Activated CD4-positive, alpha-beta T cell treated with anti-CD3 and anti-CD28 coated beads, Interleukin-2, amount 10 ng/mL, durations not matched to agents 7 days and 5 days (primary cell): ENCODE measurements at regions of chr2 and their contacts with region 1.

Region 1: GRCh38 chr2:85888684-85889626 is at the start of gene ST3GAL5:
- DNase-seq: peak; percentile 90
- H3K4me3 Mint-ChIP-seq: peak within 1 kb of the TSS; percentile 85
- H3K27ac Mint-ChIP-seq: peak within 1 kb of the TSS; percentile 91
- H3K4me1 Mint-ChIP-seq: peaks cover 68% of the 10 kb centered on the region
- H3K27me3 Mint-ChIP-seq: no peaks in the 10 kb centered on the region
- total RNA-seq, gene ST3GAL5: 36.3 to 36.8 TPM

Region 2: GRCh38 chr2:85792783-85793441 is 96.0 kb before region 1 on chr2:
- CTCF ChIA-PET with region 1: no interaction called
- POLR2A ChIA-PET with region 1: no interaction called
- DNase-seq: no peak
- H3K4me3 Mint-ChIP-seq: no peak overlapping the region
- H3K27ac Mint-ChIP-seq: no peak overlapping the region
- H3K4me1 Mint-ChIP-seq: no peaks in the 10 kb centered on the region
- H3K27me3 Mint-ChIP-seq: peaks cover 3% of the 10 kb centered on the region

Region 3: GRCh38 chr2:85826990-85827878 is 61.7 kb before region 1 on chr2:
- CTCF ChIA-PET with region 1: interaction called, 27 read pairs
- POLR2A ChIA-PET with region 1: no interaction called
- DNase-seq: peak; percentile 83
- H3K4me3 Mint-ChIP-seq: no peak overlapping the region
- H3K27ac Mint-ChIP-seq: peak overlapping the region; percentile 72
- H3K4me1 Mint-ChIP-seq: peaks cover 31% of the 10 kb centered on the region
- H3K27me3 Mint-ChIP-seq: peaks cover 24% of the 10 kb centered on the region

Region 4: DNA sequence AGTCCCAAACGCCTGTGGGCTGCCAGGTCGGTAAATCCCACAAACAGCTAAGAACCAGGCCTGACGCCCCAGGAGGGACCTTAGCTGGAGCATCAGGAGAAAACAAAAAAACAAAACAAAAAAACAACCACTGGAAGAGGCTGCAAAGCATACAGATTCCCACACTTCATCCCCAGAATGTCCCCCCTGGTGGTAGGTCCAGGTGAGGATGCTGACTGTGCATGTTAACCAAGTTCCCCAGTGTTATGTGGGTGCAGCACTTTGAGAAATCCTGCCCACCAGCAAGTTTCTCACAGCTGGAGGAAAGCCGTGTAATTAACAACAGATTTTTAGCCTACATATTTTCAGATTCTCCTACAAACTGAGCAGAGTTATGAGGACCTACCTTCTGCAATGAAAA is 15.3 kb before region 1 on chr2:
- CTCF ChIA-PET with region 1: interaction called, 15 read pairs
- POLR2A ChIA-PET with region 1: no interaction called
- DNase-seq: peak; percentile 15
- H3K4me3 Mint-ChIP-seq: no peak overlapping the region
- H3K27ac Mint-ChIP-seq: no peak overlapping the region
- H3K4me1 Mint-ChIP-seq: peaks cover 21% of the 10 kb centered on the region
- H3K27me3 Mint-ChIP-seq: no peaks in the 10 kb centered on the region

Region 5: DNA sequence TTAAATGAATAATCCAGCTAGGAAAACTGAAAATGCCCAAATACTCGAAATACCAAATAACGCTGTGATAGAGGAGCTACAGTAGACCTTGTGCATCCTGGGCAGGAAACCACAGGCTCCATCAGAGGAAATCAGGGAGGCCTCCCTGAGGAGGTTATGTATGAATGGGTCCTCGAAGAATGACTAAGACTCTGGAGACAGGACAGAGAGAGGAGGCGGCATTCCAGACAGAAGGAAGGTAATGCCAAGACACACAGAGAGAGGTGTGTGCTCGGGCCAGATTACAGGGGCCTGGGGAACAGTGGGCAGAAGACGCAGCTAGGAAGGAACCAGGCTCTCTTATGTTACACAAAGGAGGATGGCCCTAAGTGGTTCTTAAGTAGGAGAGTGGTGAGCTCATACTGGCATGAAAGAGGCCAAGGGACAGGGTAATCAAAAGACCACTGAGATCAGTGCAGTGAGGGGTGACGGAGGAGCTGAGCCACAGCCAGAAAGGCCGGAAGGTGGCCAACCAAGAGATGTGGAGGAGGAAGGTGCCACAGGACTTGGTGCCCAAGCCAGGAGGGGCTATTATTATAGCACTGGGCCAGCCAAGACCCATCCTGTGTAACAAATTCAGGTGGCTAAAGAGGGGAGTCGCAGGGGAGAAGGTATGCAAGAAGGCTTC is 10.1 kb before region 1 on chr2:
- CTCF ChIA-PET with region 1: interaction called, 15 read pairs
- POLR2A ChIA-PET with region 1: no interaction called
- DNase-seq: no peak
- H3K4me3 Mint-ChIP-seq: no peak overlapping the region
- H3K27ac Mint-ChIP-seq: peak overlapping the region; percentile 58
- H3K4me1 Mint-ChIP-seq: peaks cover 44% of the 10 kb centered on the region
- H3K27me3 Mint-ChIP-seq: no peaks in the 10 kb centered on the region

Region 6: GRCh38 chr2:85900366-85900765 is 11.4 kb after region 1 on chr2:
- CTCF ChIA-PET with region 1: interaction called, 18 read pairs
- POLR2A ChIA-PET with region 1: no interaction called
- DNase-seq: no peak
- H3K4me3 Mint-ChIP-seq: no peak overlapping the region
- H3K27ac Mint-ChIP-seq: peak overlapping the region; percentile 61
- H3K4me1 Mint-ChIP-seq: peaks cover 19% of the 10 kb centered on the region
- H3K27me3 Mint-ChIP-seq: peaks cover 2% of the 10 kb centered on the region

Region 7: GRCh38 chr2:85994421-85994777 is 105.4 kb after region 1 on chr2:
- CTCF ChIA-PET with region 1: interaction called, 11 read pairs
- POLR2A ChIA-PET with region 1: no interaction called
- DNase-seq: no peak
- H3K4me3 Mint-ChIP-seq: peak overlapping the region; percentile 34
- H3K27ac Mint-ChIP-seq: peak overlapping the region; percentile 92
- H3K4me1 Mint-ChIP-seq: peaks cover 66% of the 10 kb centered on the region
- H3K27me3 Mint-ChIP-seq: no peaks in the 10 kb centered on the region

Region 8: DNA sequence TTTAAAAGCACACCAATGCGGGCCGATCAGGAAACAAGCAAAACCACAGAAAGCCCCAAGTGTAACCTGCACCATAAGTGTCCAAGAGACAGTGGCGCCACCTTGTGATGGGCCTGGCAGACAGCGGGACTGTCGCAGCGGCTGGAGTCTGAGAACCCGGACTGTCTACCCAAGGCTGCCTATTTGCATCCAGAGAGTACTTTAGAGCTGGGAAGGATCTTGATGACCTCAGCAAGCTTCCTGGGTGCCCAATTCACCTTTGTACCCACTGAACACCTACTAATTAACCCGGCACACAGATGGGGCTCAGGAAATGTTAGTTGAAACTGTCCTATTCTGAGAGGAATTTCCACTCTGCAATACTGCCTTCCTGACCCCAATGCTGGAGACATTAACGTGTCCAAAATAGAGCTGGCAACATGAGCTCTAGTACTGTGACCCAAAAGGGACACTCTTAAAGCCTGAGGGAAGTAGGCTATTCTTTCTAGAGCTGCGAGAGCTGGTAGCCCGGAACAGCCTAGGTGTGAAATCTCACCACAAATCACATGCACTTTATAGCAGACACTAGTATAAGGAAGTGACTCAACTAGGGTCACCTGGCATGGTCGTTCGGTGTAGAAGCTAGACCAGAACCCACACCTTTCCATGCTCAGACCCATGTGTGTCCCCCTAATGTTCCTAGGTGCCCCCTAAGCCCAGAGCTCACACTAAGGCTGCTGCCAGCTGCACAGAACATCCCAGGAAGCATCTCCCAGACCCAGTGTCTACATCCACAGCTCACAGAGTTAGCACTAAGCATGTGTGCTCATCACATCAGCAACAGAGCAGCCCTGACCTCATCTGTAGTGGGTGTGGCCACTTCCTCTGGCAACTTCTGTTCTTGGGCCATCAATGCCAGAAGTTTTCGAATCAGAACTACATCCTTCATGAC is 191.3 kb after region 1 on chr2:
- CTCF ChIA-PET with region 1: interaction called, 45 read pairs
- POLR2A ChIA-PET with region 1: no interaction called
- DNase-seq: peak; percentile 91
- H3K4me3 Mint-ChIP-seq: no peak overlapping the region
- H3K27ac Mint-ChIP-seq: peak overlapping the region; percentile 81
- H3K4me1 Mint-ChIP-seq: peaks cover 40% of the 10 kb centered on the region
- H3K27me3 Mint-ChIP-seq: no peaks in the 10 kb centered on the region

Region 9: DNA sequence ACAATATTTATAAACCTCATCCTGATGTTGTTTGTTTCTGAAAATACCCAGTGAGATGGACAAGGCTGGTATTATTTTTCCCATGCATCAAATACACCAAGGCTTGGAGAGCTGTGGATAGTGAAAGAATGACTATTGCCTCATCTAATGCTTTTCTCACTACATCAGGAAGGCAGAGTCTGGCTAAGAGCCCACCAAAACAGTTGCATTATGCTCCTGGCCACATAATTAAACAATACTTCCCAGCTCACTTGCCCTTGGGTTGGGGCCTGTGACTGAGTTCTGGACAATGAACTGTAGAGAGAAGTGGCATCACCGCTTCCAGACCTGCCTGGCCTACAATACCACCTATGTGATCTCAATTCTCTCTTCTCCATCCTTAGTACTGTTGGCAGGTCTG is 494.9 kb after region 1 on chr2:
- CTCF ChIA-PET with region 1: no interaction called
- POLR2A ChIA-PET with region 1: no interaction called
- DNase-seq: no peak
- H3K4me3 Mint-ChIP-seq: no peak overlapping the region
- H3K27ac Mint-ChIP-seq: no peak overlapping the region
- H3K4me1 Mint-ChIP-seq: no peaks in the 10 kb centered on the region
- H3K27me3 Mint-ChIP-seq: peaks cover 2% of the 10 kb centered on the region